Calu3 (cell line): ENCODE measurements at regions of chr9 and their contacts with region 1.

Region 1: DNA sequence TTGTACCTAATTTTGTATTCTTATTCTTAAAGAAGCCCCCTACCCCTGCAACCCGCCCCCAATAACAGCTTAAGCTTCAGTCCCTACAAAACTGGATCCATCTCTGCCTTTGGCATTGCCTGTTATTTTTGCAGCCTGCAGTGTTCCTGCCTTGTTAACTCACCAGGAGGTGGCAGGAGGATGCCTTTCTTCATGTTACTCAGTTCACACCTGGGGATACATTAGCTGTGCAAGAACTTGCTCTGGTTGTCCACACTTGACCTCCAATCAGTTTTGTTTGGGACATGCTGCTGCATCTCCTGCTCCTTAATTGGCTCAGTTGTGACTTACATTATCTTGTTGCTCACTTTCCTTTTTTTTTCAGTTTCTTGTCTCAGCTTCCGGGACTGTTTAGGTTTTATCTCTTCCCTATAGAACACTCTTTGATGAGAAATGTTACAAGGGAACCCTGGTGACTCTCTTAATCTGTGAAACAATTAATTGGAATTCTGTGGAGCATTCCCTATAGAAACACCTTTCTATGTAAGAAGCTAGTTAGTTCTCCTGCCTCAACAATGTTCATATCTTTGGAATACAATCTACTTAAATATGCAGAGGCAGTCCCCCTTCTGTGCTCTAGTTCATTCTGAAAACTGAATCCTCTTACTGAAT is 467.7 kb upstream of the ACO1 start:
- DNase-seq: no peak
- H3K4me3 Mint-ChIP-seq: no peak overlapping the region
- H3K27ac Mint-ChIP-seq: no peak overlapping the region
- H3K4me1 Mint-ChIP-seq: no peaks in the 10 kb centered on the region
- H3K27me3 Mint-ChIP-seq: no peaks in the 10 kb centered on the region
- CTCF ChIP-seq: no peak

Region 2: DNA sequence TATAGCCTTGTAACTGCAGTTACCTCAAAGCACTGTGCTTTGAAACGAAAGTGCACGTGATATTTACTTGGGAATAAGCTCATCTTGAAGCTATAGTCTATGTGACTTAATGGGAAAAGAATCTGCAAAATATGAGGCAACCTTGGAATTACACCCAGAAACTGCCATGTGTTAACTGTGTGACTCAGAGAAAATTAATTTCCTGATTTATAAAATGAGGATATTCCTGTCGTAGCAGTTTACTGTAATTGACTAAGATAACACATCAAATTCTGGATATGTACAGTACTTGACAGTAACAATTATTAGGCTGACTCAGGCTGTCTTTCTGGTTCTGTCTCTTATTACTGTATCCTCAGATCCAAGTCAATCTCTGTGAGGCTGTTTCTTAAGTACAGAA is 612.1 kb before region 1 on chr9:
- CTCF ChIA-PET with region 1: no interaction called
- intact Hi-C with region 1: no loop called
- DNase-seq: no peak
- H3K4me3 Mint-ChIP-seq: no peak overlapping the region
- H3K27ac Mint-ChIP-seq: no peak overlapping the region
- H3K4me1 Mint-ChIP-seq: no peaks in the 10 kb centered on the region
- H3K27me3 Mint-ChIP-seq: no peaks in the 10 kb centered on the region
- CTCF ChIP-seq: no peak

Region 3: DNA sequence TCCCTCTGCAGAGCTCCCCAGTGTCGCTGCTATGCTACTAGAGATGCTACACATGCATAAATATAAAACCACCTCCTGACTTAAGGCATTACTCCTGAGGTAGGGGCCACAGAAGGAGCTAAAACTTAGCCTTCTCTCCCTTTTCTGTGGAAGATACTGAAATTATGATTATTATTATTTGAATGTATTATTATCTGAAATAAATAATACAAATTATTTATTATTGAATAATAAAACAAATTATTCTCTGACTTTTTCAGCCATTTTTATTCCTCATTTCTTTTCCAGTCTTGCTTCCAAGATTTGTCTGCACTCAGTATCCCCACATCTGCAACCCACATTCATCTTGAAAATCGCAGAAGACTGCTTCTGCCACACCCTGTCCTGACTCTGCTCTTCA is 52.8 kb after region 1 on chr9:
- CTCF ChIA-PET with region 1: no interaction called
- intact Hi-C with region 1: loop called (anchors 10 kb)
- DNase-seq: no peak
- H3K4me3 Mint-ChIP-seq: no peak overlapping the region
- H3K27ac Mint-ChIP-seq: no peak overlapping the region
- H3K4me1 Mint-ChIP-seq: no peaks in the 10 kb centered on the region
- H3K27me3 Mint-ChIP-seq: peaks cover 12% of the 10 kb centered on the region
- CTCF ChIP-seq: no peak

Region 4: DNA sequence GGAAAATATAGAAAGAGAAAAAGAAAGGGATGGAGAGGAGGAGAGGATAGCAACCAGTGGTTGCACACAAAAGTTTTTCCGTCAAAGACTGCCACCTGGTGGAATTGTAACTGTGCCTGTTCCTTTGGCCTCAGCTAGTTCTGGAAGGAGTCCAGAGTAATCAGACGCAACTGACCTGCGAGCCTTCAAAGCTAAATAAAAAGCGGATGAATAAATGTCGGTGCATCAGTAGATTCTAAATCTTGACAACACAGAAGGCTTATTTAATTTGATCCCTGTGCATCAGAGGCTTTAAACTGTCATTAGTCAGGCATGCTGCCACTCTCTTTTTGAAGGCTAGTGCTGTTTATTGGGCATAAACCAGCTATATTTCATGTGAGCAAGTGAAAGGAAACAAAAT is 334.8 kb after region 1 on chr9:
- CTCF ChIA-PET with region 1: no interaction called
- intact Hi-C with region 1: loop called (anchors 2 kb)
- DNase-seq: peak; percentile 62
- H3K4me3 Mint-ChIP-seq: no peak overlapping the region
- H3K27ac Mint-ChIP-seq: no peak overlapping the region
- H3K4me1 Mint-ChIP-seq: no peaks in the 10 kb centered on the region
- H3K27me3 Mint-ChIP-seq: no peaks in the 10 kb centered on the region
- CTCF ChIP-seq: peak; percentile 46